Activated T-helper 2 cell treated with anti-CD3 and anti-CD28 coated beads, Interferon-gamma antibody, Interleukin-2, Interleukin-4, amounts not matched to agents 10 μg/mL and 5 μg/mL and 100 μg/mL, durations not matched to agents 14 hours and 24 hours and 36 hours (primary cell): ENCODE measurements at regions of chr12 and their contacts with region 1.

Region 1: GRCh38 chr12:57771708-57772428 is at the start of gene METTL1:
- DNase-seq: peak; percentile 90
- H3K4me3 Mint-ChIP-seq: peak within 1 kb of the TSS; percentile 97
- H3K27ac Mint-ChIP-seq: peak within 1 kb of the TSS; percentile 99
- H3K4me1 Mint-ChIP-seq: peaks cover 11% of the 10 kb centered on the region
- H3K27me3 Mint-ChIP-seq: no peaks in the 10 kb centered on the region
- total RNA-seq, gene METTL1: 61.2 and 64.5 TPM in 2 replicates

Region 2: DNA sequence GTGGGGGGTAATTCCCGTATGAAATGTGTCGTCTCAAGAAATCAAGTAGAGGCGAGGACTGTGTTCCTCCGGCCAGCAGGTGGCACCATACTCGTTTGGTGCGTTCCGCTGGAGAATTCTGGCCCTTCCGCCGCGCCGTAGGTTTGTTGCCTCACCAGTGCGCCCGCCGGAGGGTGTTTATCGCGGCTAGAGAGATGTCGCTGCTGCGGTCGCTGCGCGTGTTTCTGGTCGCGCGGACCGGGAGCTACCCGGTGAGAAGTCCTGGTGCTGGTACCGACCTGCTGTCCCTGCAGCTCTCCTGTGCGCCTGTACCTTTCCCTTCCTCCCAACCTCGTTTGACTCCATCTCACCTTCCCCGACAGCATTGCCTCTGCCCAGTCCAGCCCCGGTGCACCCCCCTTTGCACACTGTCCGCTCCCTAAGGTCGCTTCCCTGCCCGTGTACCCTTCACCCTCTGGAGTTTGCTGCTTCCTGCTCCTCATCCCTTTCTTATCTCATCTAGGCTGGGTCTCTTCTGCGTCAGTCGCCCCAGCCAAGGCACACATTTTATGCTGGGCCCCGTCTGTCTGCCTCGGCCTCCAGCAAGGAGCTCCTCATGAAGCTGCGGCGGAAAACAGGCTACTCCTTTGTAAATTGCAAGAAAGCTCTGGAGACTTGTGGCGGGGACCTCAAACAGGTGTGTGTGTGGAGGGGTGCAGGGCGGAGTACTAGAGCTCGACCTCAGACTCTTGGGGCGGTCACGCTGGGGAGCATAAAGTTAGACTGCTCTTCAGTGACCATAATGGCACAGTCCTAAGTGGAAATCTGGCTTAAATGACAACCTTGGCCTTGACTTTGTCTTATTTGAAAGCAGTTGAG is 11.0 kb after region 1 on chr12 and contains the start of gene TSFM:
- intact Hi-C with region 1: loop called (anchors 1 kb)
- DNase-seq: peak; percentile 94
- H3K4me3 Mint-ChIP-seq: peak within 1 kb of the TSS; percentile 98
- H3K27ac Mint-ChIP-seq: peak within 1 kb of the TSS; percentile 95
- H3K4me1 Mint-ChIP-seq: peaks cover 21% of the 10 kb centered on the region
- H3K27me3 Mint-ChIP-seq: no peaks in the 10 kb centered on the region
- total RNA-seq, gene TSFM: 44.9 and 52.7 TPM in 2 replicates